ENCODE measurements at regions of chr1 and their contacts with region 1.

Region 1: GRCh38 chr1:76140227-76140626 is 65.7 kb downstream of the ST6GALNAC3 start:
- DNase-seq: peak in 1 of 7 donors; percentile 37
- H3K4me3 ChIP-seq: no peak overlapping the region
- H3K27ac ChIP-seq: peak overlapping the region in 1 of 5 donors; percentile 10
- H3K4me1 ChIP-seq: no peaks in the 10 kb centered on the region
- H3K27me3 ChIP-seq: no peaks in the 10 kb centered on the region
- CTCF ChIP-seq: no peak
- POLR2A ChIP-seq: no peak

Region 2: DNA sequence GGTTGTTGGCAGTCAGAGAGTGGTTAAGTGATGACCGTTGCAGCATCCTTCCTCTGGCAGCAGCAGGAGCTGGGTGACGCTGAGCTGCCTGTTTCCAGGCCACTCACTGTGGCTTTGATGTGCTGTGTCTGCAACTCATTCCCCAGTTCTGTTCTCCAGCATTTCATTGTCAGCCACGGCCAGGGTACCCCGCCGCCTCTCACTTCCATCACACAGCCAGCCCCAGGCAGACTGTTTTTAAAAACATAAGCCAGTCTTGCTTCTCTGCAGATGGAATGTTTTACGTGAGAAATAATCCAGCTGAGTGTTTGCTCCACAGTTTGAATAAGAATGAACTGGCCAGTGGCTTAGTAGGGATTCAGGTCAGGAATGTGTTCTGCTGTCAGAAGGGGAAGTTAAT is 87.2 kb before region 1 on chr1:
- intact Hi-C with region 1: no loop called
- DNase-seq: peak in 2 of 7 donors; percentile 20 to 58
- H3K4me3 ChIP-seq: no peak overlapping the region
- H3K27ac ChIP-seq: no peak overlapping the region
- H3K4me1 ChIP-seq: no peaks in the 10 kb centered on the region
- H3K27me3 ChIP-seq: peaks cover 8% of the 10 kb centered on the region
- CTCF ChIP-seq: no peak
- POLR2A ChIP-seq: no peak

Region 3: GRCh38 chr1:77134359-77134758 is 994.1 kb after region 1 on chr1:
- intact Hi-C with region 1: loop called in 1 of 2 experiments (anchors 10 kb)
- DNase-seq: peak in 1 of 7 donors; percentile 13
- H3K4me3 ChIP-seq: no peak overlapping the region
- H3K27ac ChIP-seq: no peak overlapping the region
- H3K4me1 ChIP-seq: no peaks in the 10 kb centered on the region
- H3K27me3 ChIP-seq: no peaks in the 10 kb centered on the region
- CTCF ChIP-seq: no peak
- POLR2A ChIP-seq: no peak

Measured in adrenal gland (tissue), 19 donors.